SK-N-SH (cell line): ENCODE measurements at regions of chr7 and their contacts with region 1.

Region 1: GRCh38 chr7:100081535-100082102 is at the start of gene ZNF3:
- DNase-seq: peak; percentile 99
- H3K4me3 ChIP-seq: peak within 1 kb of the TSS; percentile 67 to 94
- H3K27ac ChIP-seq: peak within 1 kb of the TSS; percentile 76 to 87
- H3K4me1 ChIP-seq: peaks cover 12 to 19% of the 10 kb centered on the region in 2 experiments; a peak in 3 of 4 replicates
- H3K27me3 ChIP-seq: no peaks in the 10 kb centered on the region
- CTCF ChIP-seq: peak; percentile 100
- EP300 ChIP-seq: peak; percentile 30 to 63; a peak in 3 of 4 replicates
- RAD21 ChIP-seq: peak; percentile 85
- polyA plus RNA-seq, gene ZNF3: 30.5 and 45.2 TPM in 2 replicates

Region 2: DNA sequence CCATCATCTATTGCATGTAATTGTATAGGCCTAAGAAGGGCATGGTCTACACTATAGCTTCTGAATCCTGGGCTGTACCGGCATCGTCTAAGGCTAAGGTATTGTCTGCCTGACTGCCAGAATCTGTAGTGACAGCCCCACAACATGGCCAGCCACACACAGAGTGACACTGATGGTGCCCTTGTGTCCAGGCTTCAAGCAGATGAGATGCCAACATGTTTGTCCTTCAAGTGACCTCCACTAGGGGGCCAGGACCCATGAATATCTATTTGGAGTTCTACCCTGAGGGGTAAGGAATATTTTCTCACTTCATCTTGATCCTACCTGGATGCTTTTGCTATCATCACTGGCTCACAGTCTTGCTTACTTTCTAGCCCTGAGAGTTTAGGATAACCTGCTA is 348.2 kb before region 1 on chr7:
- CTCF ChIA-PET with region 1: no interaction called
- POLR2A ChIA-PET with region 1: no interaction called
- DNase-seq: no peak
- H3K4me3 ChIP-seq: no peak overlapping the region
- H3K27ac ChIP-seq: no peak overlapping the region
- H3K4me1 ChIP-seq: peaks cover 0 to 9% of the 10 kb centered on the region in 2 experiments; a peak in 1 of 4 replicates
- H3K27me3 ChIP-seq: no peaks in the 10 kb centered on the region
- CTCF ChIP-seq: peak; percentile 55
- EP300 ChIP-seq: no peak
- RAD21 ChIP-seq: no peak

Region 3: DNA sequence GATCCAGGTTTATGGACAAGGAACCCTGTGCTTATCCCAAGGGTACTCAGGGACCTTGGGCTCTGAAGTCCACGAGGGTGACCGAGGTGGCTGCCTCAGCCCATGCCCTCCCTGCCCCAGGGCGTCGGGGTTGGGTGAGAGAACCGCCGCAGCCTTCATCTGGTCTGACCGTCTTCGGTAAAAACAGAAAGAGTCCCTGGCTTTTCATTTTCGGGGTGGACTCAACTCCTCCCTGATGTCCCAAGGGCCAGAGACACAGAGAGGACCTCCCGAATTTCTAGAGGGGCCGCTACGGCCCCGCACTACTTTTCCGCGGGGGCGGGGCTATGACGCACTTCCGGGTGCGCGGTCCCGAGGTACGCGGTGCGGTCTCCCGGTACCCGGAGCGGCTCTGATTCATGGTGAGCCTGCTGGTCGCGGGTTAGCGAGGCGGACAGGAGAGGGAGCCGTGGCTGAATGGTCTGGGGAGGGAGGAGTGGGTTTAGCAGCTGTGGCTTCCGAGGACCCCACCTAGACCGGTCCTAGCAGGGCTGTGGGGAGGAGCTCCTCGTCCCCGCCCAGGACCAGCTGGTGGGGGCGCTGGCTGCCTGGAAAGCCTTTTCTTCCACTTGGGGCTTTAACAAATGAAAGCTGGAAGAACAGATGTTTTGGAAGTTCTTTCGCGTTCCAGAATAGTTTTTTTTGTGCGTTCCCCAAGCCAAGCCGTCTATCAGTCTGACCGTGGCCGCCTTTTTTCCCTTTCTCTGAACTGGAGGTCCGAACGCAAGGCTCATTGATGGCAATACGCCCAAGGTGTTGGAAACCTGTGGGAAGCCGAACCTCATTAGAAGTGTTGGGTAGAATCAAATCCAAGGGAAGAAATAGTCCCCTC is 31.9 kb before region 1 on chr7 and contains the start of gene ZSCAN21:
- CTCF ChIA-PET with region 1: interaction called, 10 read pairs
- POLR2A ChIA-PET with region 1: interaction called, 3 read pairs
- DNase-seq: peak; percentile 96
- H3K4me3 ChIP-seq: peak within 1 kb of the TSS; percentile 70 to 86
- H3K27ac ChIP-seq: peak within 1 kb of the TSS; percentile 93 to 94
- H3K4me1 ChIP-seq: peaks cover 5 to 9% of the 10 kb centered on the region in 2 experiments; a peak in 2 of 4 replicates
- H3K27me3 ChIP-seq: no peaks in the 10 kb centered on the region
- CTCF ChIP-seq: peak; percentile 47
- EP300 ChIP-seq: 0 out of 4 replicates have a peak, but pooled peaks of 1 of the 2 experiments have one; percentile 20
- RAD21 ChIP-seq: peak; percentile 31; the same call in 1 of the 2 replicates
- polyA plus RNA-seq, gene ZSCAN21: 17.5 and 22.8 TPM in 2 replicates

Region 4: DNA sequence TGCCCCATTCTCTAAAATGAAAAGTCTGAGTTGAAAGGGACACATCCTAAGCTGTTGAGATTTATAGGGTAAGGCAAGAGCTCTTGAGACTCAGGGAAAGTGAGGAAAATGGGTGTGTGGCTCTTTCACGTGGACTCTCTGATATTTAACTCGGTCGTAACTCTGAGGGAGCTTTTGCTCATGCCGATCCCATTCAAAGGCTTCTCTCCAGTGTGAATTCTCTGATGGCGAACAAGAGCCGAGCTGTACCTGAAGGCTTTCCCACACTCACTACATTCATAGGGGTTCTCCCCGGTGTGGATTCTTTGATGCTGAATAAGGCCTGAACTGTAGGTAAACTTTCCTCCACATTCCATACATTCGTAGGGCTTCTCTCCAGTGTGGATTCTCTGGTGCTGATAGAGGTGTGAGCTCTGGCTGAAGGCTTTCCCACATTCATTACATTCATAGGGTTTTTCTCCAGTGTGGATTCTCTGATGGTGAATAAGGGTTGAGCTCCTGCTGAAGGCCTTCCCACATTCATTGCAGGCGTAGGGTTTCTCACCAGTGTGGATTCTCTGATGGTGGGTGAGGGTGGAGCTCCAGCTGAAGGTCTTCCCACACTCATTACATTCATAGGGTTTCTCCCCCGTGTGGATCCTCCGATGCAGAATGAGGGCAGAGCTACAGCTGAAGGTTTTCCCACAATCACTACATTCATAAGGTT is 10.4 kb before region 1 on chr7:
- CTCF ChIA-PET with region 1: interaction called, 21 read pairs
- POLR2A ChIA-PET with region 1: interaction called, 6 read pairs
- DNase-seq: no peak
- H3K4me3 ChIP-seq: peak overlapping the region in 1 of 2 experiments; percentile 6; a peak in 1 of 4 replicates
- H3K27ac ChIP-seq: no peak overlapping the region
- H3K4me1 ChIP-seq: peaks cover 0 to 4% of the 10 kb centered on the region in 2 experiments; a peak in 1 of 4 replicates
- H3K27me3 ChIP-seq: no peaks in the 10 kb centered on the region
- CTCF ChIP-seq: no peak
- EP300 ChIP-seq: no peak
- RAD21 ChIP-seq: no peak

Region 5: DNA sequence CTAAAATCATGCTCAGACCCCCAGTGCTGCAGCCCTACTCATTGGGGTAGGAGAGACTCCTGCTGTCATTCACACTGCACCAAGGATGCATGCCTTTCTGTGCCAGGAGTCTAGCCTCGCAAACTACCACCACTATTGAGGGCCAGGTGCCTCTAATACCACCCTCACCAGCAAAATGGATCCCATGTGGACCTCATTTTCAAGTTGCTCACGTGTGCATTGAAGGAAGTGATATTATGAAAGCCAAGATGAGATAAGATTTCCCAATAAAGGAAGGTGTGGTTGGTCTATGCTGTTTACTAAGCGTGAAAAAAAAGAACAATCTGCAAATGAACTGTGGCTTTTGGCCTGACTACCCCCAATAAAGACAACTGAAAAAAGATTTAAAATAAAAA is 59.9 kb after region 1 on chr7:
- CTCF ChIA-PET with region 1: no interaction called
- POLR2A ChIA-PET with region 1: no interaction called
- DNase-seq: no peak
- H3K4me3 ChIP-seq: no peak overlapping the region
- H3K27ac ChIP-seq: no peak overlapping the region
- H3K4me1 ChIP-seq: no peaks in the 10 kb centered on the region
- H3K27me3 ChIP-seq: no peaks in the 10 kb centered on the region
- CTCF ChIP-seq: no peak
- EP300 ChIP-seq: no peak
- RAD21 ChIP-seq: no peak